Activated naive CD4-positive, alpha-beta T cell treated with anti-CD3 and anti-CD28 coated beads for 36 hours (primary cell): ENCODE measurements at regions of chr5 and their contacts with region 1.

Region 1: GRCh38 chr5:54905943-54906537 is 79.4 kb downstream of the ESM1 start:
- DNase-seq: peak; percentile 85
- H3K4me3 Mint-ChIP-seq: no peak overlapping the region
- H3K27ac Mint-ChIP-seq: no peak overlapping the region
- H3K4me1 Mint-ChIP-seq: peaks cover 13% of the 10 kb centered on the region
- H3K27me3 Mint-ChIP-seq: peaks cover 20% of the 10 kb centered on the region

Region 2: GRCh38 chr5:54927097-54927746 is 21.2 kb after region 1 on chr5:
- CTCF ChIA-PET with region 1: interaction called, 9 read pairs
- intact Hi-C with region 1: loop called (anchors 1 kb)
- DNase-seq: no peak
- H3K4me3 Mint-ChIP-seq: no peak overlapping the region
- H3K27ac Mint-ChIP-seq: no peak overlapping the region
- H3K4me1 Mint-ChIP-seq: peaks cover 3% of the 10 kb centered on the region
- H3K27me3 Mint-ChIP-seq: peaks cover 2% of the 10 kb centered on the region

Region 3: DNA sequence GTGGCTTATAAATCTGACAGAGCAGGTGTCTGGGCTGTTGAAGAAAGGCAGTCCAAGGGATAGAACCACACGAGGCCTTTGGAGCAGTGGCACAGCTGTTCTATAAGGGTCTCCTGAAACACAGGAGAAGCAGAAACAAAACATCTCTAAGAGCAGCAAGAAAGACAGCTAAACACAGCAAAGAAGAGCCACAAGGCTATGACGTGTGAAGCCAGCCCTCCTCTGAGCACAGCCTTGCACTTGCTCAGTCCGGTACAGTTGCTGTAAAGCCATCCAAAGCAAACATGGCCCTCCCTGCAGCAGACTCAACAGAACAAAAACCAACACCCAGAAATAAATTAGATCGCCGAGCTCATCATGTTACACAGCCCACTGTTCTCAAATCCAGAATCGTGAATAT is 115.4 kb after region 1 on chr5:
- CTCF ChIA-PET with region 1: interaction called, 4 read pairs
- intact Hi-C with region 1: loop called (anchors 5 kb)
- DNase-seq: no peak
- H3K4me3 Mint-ChIP-seq: no peak overlapping the region
- H3K27ac Mint-ChIP-seq: no peak overlapping the region
- H3K4me1 Mint-ChIP-seq: peaks cover 41% of the 10 kb centered on the region
- H3K27me3 Mint-ChIP-seq: no peaks in the 10 kb centered on the region

Region 4: GRCh38 chr5:55102348-55102747 is 196.3 kb after region 1 on chr5 and contains the start of gene GZMA:
- CTCF ChIA-PET with region 1: interaction called, 4 read pairs
- intact Hi-C with region 1: loop called (anchors 1 kb)
- DNase-seq: peak; percentile 56
- H3K4me3 Mint-ChIP-seq: peak within 1 kb of the TSS; percentile 30
- H3K27ac Mint-ChIP-seq: no peak within 1 kb of the TSS
- H3K4me1 Mint-ChIP-seq: peaks cover 58% of the 10 kb centered on the region
- H3K27me3 Mint-ChIP-seq: peaks cover 9% of the 10 kb centered on the region
- total RNA-seq, gene GZMA: 0.24 TPM in 1 of 2 experiments, not detected in the other

Region 5: GRCh38 chr5:55159763-55160492 is 253.9 kb after region 1 on chr5 and contains the start of gene GPX8:
- CTCF ChIA-PET with region 1: interaction called, 49 read pairs
- intact Hi-C with region 1: loop called (anchors 1 kb)
- DNase-seq: peak; percentile 29
- H3K4me3 Mint-ChIP-seq: no peak within 1 kb of the TSS
- H3K27ac Mint-ChIP-seq: no peak within 1 kb of the TSS
- H3K4me1 Mint-ChIP-seq: no peaks in the 10 kb centered on the region
- H3K27me3 Mint-ChIP-seq: peaks cover 18% of the 10 kb centered on the region
- total RNA-seq, gene GPX8: not detected